Heart right ventricle (tissue), 16 donors: ENCODE measurements at regions of chr7 and their contacts with region 1.

Region 1: DNA sequence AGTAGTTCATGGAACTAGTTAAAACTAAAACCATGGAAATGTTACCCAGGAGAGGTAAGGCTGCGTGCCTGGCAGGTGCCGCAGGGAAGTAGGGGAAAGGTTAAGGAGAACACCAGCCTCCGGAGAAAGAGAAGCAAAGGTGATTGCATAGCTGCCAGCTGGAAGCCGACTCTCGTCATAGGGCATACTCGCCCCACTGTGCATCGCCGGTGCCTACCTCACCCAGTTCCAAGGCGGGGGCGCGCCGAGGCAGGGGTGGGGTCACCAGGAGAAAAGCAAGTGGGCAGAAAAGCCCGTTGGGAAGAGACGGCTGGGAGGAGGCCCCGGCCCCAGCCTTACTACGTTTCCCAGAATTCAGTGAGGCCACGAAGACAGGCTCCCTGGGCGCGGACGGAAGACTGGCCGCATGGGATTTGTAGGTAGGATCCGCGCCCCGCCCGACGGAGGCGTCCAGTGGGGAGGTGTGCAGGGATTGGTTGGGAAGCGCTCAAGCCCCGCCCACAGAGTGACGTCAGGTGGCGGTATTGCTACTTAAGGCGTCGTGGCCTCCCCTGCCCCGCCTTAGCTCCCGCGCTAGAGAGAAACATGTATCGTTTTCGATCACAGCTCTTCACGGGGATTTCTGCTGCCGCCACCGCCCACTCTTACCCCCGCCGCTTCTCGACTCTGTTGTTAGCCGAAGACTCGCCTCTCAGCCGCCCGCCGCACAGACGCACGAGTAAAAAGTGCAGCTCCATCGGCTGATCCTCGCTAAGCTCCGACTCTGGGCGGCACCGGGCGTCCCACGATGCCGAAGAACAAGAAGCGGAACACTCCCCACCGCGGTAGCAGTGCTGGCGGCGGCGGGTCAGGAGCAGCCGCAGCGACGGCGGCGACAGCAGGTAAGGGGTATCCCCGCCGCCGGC is at the start of gene IFRD1:
- DNase-seq: peak; percentile 99
- ATAC-seq: peak; percentile 90 to 96 (median 94)
- H3K4me3 ChIP-seq: peak within 1 kb of the TSS; percentile 77 to 97 (median 90)
- H3K27ac ChIP-seq: peak within 1 kb of the TSS; percentile 91 to 99 (median 96)
- H3K4me1 ChIP-seq: peaks cover 0 to 49% (median 39%) of the 10 kb centered on the region in 9 donors
- H3K27me3 ChIP-seq: no peaks in the 10 kb centered on the region
- CTCF ChIP-seq: no peak
- total RNA-seq, gene IFRD1: 17.5 to 94.6 (median 26.2) TPM

Region 2: DNA sequence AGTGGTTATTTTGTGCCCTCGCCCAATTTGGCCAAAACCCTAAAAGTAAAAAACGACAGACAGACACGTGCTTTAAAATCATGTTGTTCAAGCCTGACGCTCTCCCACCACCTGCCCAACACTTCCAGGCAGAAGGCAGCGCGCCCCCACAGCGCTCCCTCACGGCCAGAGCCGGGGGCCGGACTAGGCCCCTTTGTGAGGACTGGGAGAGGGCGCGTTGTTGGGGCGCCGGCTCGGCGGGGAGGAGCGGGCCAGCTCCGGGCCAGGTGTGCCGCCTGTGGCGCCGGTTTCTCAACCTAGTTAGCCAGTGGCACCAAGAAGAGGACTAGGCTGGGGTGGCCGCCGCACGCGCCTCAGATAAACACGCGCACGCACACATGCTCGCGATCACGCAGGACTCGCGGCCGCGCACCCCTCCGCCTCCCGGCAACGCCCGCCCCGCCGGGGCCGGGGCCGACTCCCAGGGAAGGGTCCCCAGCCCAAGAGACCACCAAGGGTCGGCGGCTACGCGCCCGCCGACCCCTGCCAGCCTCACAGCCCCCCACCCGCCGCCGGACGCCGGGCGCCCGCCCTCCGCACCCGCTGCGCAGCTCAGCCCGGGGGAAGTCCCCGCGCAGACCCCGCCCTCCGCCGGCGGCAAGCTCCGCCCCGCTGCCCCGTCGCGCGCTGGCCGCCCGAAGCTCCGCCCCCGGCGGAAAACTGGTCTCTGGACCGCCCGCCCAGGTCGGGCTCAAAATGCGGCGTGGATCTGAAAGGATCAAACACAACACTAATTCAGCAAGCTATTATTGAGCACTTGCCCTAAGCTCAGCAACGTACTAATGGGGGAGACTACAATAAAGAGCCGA is 888.0 kb before region 1 on chr7 and contains the start of gene IMMP2L:
- intact Hi-C with region 1: loop called in 1 of 10 experiments (anchors 10 kb)
- DNase-seq: peak; percentile 89 to 93
- ATAC-seq: peak; percentile 98 to 100 (median 99)
- H3K4me3 ChIP-seq: peak within 1 kb of the TSS; percentile 73 to 95 (median 83)
- H3K27ac ChIP-seq: peak within 1 kb of the TSS; percentile 66 to 94 (median 90)
- H3K4me1 ChIP-seq: peaks cover 6 to 24% (median 17%) of the 10 kb centered on the region in 9 donors
- H3K27me3 ChIP-seq: peaks cover 0 to under 1% (median 0%) of the 10 kb centered on the region in 7 donors
- CTCF ChIP-seq: peak in 7 of 9 donors; percentile 29 to 64 (median 51)
- total RNA-seq, gene IMMP2L: 12.4 to 20.8 (median 17.5) TPM

Region 3: DNA sequence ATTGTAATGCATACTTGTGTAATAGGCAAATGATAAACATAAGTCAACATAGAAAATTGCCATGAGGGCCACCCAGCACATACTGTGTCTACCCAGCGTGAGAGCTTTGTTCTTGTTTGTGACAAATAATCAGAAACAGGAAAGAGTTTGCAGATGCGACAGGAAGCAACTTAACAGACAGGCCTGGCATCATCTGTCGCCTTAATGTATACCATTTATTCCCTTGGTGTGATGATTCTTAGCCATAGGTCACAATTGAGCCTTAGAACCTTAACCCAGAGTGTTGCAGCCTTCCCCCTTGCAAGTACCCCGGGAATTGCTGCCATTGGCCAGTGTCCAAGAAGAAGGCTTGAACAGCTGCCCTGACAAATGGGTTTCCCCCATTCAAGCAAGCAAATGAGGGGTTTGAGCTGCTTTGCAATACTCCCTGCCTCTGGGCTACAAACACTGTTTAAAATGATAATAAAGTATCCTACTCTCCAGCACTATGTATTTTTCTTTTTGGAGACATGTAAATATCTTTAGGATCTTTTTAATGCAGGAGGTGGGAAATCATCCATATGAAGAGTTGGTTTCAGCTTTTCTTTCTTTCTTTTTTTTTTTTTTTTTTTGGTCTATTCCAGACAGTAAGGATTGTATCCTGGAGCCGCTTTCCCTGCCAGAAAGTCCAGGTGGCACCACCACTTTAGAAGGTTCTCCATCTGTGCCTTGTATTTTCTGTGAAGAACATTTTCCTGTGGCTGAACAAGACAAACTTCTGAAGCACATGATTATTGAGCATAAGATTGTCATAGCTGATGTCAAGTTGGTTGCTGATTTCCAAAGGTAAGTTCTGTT is 163.7 kb before region 1 on chr7:
- intact Hi-C with region 1: no loop called
- DNase-seq: no peak
- ATAC-seq: no peak
- H3K4me3 ChIP-seq: no peak overlapping the region
- H3K27ac ChIP-seq: no peak overlapping the region
- H3K4me1 ChIP-seq: peaks cover 0 to 8% (median 0%) of the 10 kb centered on the region in 9 donors
- H3K27me3 ChIP-seq: no peaks in the 10 kb centered on the region
- CTCF ChIP-seq: no peak

Region 4: DNA sequence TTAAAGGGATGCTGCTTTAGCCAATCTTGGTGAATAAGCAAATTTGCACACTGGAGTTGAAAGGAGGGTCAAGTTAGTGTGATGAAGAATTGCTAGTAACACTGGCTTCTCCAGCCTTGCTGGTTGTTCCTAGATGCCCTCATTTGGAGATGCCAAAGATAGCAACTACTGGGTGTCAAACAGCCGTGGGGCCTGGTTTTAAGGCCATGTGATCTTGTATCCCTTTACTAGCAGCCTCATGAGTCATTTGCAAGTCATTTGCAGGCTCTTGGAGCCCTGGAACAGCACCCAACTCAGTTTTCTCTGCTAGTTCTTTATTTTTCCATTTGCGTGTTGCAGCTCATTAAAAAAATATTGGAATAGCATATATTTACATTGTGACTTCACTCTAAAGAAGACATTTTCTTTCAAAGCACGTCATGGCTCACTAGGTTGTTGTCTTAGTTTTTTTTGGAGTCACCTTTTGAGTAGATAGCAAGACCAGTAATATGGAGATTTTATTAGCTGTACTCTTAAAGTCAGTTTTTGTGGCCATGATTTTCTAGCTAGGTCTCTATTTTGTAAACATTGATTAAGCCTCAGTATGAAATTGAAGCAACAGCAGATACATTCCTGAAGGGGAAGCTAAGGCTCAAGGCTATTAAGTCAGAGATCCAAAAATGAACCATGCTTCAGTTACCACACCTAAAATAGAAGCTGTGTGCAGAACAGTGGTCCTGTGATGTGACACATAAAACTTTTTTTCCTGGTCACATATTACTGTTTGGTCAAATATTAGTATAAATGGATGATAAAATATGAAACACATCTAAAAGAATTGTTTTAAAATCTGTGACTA is 31.9 kb after region 1 on chr7:
- intact Hi-C with region 1: loop called in 1 of 10 experiments (anchors 2 kb)
- DNase-seq: peak in 1 of 2 donors; percentile 61
- ATAC-seq: peak; percentile 64 to 89 (median 86)
- H3K4me3 ChIP-seq: peak overlapping the region in 4 of 10 donors; percentile 13 to 34 (median 20)
- H3K27ac ChIP-seq: peak overlapping the region; percentile 6 to 88 (median 82)
- H3K4me1 ChIP-seq: peaks cover 3 to 48% (median 21%) of the 10 kb centered on the region in 9 donors
- H3K27me3 ChIP-seq: no peaks in the 10 kb centered on the region
- CTCF ChIP-seq: no peak